CD8-positive, alpha-beta T cell (primary cell): ENCODE measurements at regions of chr6 and their contacts with region 1.

Region 1: DNA sequence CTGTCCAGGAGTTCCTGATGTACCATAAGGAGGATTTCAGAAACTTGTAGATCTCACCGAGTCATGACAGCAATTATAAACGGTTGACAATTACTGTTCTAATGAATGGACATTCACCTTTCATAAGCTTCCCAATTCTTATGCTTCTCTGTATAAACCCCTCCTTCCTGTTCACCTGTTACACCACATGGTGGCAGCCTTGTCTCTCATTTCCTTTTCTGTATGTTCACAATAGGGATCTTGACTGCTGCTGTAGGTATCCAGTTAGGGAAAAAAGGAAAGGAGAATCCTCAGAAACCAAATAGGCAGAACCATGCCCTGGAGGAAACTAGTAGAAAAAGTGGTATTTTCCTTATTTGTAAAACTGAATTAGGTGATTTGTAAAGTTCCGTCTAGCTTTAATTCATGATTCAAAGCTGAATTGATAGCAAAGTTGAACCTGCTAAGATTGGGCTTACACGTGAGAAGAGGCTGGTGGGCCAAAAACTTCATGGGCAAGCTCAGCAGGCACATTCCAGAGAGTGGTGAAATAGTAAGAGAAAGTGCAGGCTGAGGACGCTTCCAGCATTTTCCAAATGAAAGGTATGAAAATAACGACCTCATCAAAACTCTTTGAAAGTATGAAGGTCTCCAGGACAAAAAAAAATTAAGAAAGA is 29.0 kb upstream of the TBPL1 start:
- DNase-seq: peak; percentile 8 to 82 (median 53)
- ATAC-seq: peak; percentile 80
- H3K4me3 ChIP-seq: no peak overlapping the region
- H3K4me3 Mint-ChIP-seq: no peak overlapping the region
- H3K27ac ChIP-seq: no peak overlapping the region
- H3K27ac Mint-ChIP-seq: no peak overlapping the region
- H3K4me1 ChIP-seq: no peaks in the 10 kb centered on the region
- H3K4me1 Mint-ChIP-seq: no peaks in the 10 kb centered on the region
- H3K27me3 ChIP-seq: no peaks in the 10 kb centered on the region
- H3K27me3 Mint-ChIP-seq: peaks cover 22% of the 10 kb centered on the region
- CTCF ChIP-seq: peak; percentile 91

Region 2: GRCh38 chr6:133804263-133804662 is 119.8 kb before region 1 on chr6:
- CTCF ChIA-PET with region 1: no interaction called
- POLR2A ChIA-PET with region 1: no interaction called
- intact Hi-C with region 1: no loop called
- DNase-seq: no peak
- ATAC-seq: no peak
- H3K4me3 ChIP-seq: no peak overlapping the region
- H3K4me3 Mint-ChIP-seq: no peak overlapping the region
- H3K27ac ChIP-seq: no peak overlapping the region
- H3K27ac Mint-ChIP-seq: no peak overlapping the region
- H3K4me1 ChIP-seq: no peaks in the 10 kb centered on the region
- H3K4me1 Mint-ChIP-seq: no peaks in the 10 kb centered on the region
- H3K27me3 ChIP-seq: no peaks in the 10 kb centered on the region
- H3K27me3 Mint-ChIP-seq: peaks cover 18% of the 10 kb centered on the region
- CTCF ChIP-seq: no peak

Region 3: GRCh38 chr6:133945158-133945557 is 21.1 kb after region 1 on chr6:
- CTCF ChIA-PET with region 1: interaction called, 16 read pairs
- POLR2A ChIA-PET with region 1: no interaction called
- intact Hi-C with region 1: no loop called
- DNase-seq: no peak
- ATAC-seq: no peak
- H3K4me3 ChIP-seq: no peak overlapping the region
- H3K4me3 Mint-ChIP-seq: no peak overlapping the region
- H3K27ac ChIP-seq: no peak overlapping the region
- H3K27ac Mint-ChIP-seq: no peak overlapping the region
- H3K4me1 ChIP-seq: no peaks in the 10 kb centered on the region
- H3K4me1 Mint-ChIP-seq: no peaks in the 10 kb centered on the region
- H3K27me3 ChIP-seq: no peaks in the 10 kb centered on the region
- H3K27me3 Mint-ChIP-seq: peaks cover 2% of the 10 kb centered on the region
- CTCF ChIP-seq: no peak

Region 4: GRCh38 chr6:133983099-133983939 is 59.3 kb after region 1 on chr6:
- CTCF ChIA-PET with region 1: interaction called, 71 read pairs
- POLR2A ChIA-PET with region 1: no interaction called
- intact Hi-C with region 1: loop called in 1 of 2 experiments (anchors 5 kb)
- DNase-seq: peak in 8 of 9 experiments; percentile 35 to 73 (median 61)
- ATAC-seq: peak; percentile 91
- H3K4me3 ChIP-seq: no peak overlapping the region
- H3K4me3 Mint-ChIP-seq: peak overlapping the region; percentile 23
- H3K27ac ChIP-seq: no peak overlapping the region
- H3K27ac Mint-ChIP-seq: peak overlapping the region; percentile 55
- H3K4me1 ChIP-seq: peaks cover 24% of the 10 kb centered on the region
- H3K4me1 Mint-ChIP-seq: peaks cover 47% of the 10 kb centered on the region
- H3K27me3 ChIP-seq: no peaks in the 10 kb centered on the region
- H3K27me3 Mint-ChIP-seq: no peaks in the 10 kb centered on the region
- CTCF ChIP-seq: no peak

Region 5: GRCh38 chr6:134063966-134064445 is 139.9 kb after region 1 on chr6:
- CTCF ChIA-PET with region 1: interaction called, 238 read pairs
- POLR2A ChIA-PET with region 1: no interaction called
- intact Hi-C with region 1: loop called (anchors 1 kb)
- DNase-seq: peak; percentile 6 to 75 (median 50)
- ATAC-seq: peak; percentile 98
- H3K4me3 ChIP-seq: no peak overlapping the region
- H3K4me3 Mint-ChIP-seq: no peak overlapping the region
- H3K27ac ChIP-seq: no peak overlapping the region
- H3K27ac Mint-ChIP-seq: no peak overlapping the region
- H3K4me1 ChIP-seq: no peaks in the 10 kb centered on the region
- H3K4me1 Mint-ChIP-seq: peaks cover 2% of the 10 kb centered on the region
- H3K27me3 ChIP-seq: no peaks in the 10 kb centered on the region
- H3K27me3 Mint-ChIP-seq: no peaks in the 10 kb centered on the region
- CTCF ChIP-seq: peak; percentile 75

Region 6: DNA sequence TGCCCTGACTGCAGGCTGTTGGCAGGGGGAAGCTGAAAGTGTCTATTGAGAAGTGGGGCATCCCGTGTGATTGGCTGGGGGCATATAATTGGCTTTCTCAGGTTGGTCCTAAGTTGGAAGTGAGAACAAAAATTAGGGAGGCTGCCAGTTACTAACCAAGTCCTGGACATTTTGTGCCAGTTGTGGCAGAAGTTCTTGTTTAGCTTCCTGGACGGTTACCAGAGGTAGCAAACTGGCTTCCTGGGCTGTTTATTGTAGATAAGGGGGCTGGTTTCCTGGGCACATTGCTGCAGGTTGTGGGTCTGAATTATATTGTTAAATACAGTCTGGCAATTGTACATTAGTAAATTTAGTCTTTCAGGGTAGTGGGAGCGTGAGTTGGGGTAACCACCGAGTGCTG is 178.9 kb after region 1 on chr6:
- CTCF ChIA-PET with region 1: interaction called, 170 read pairs
- POLR2A ChIA-PET with region 1: interaction called, 3 read pairs
- intact Hi-C with region 1: no loop called
- DNase-seq: no peak
- ATAC-seq: no peak
- H3K4me3 ChIP-seq: no peak overlapping the region
- H3K4me3 Mint-ChIP-seq: no peak overlapping the region
- H3K27ac ChIP-seq: no peak overlapping the region
- H3K27ac Mint-ChIP-seq: no peak overlapping the region
- H3K4me1 ChIP-seq: no peaks in the 10 kb centered on the region
- H3K4me1 Mint-ChIP-seq: no peaks in the 10 kb centered on the region
- H3K27me3 ChIP-seq: no peaks in the 10 kb centered on the region
- H3K27me3 Mint-ChIP-seq: peaks cover 14% of the 10 kb centered on the region
- CTCF ChIP-seq: no peak